B cell (primary cell): ENCODE measurements at regions of chr2 and their contacts with region 1.

Region 1: GRCh38 chr2:54723131-54723995 is at the start of gene EML6:
- DNase-seq: peak; percentile 99
- ATAC-seq: peak; percentile 95
- H3K4me3 ChIP-seq: peak within 1 kb of the TSS; percentile 51 to 98 (median 79)
- H3K4me3 Mint-ChIP-seq: peak within 1 kb of the TSS; percentile 100
- H3K27ac ChIP-seq: peak within 1 kb of the TSS in 1 of 2 donors; percentile 59
- H3K27ac Mint-ChIP-seq: peak within 1 kb of the TSS; percentile 94
- H3K4me1 ChIP-seq: peaks cover 15 to 17% of the 10 kb centered on the region in 2 donors
- H3K4me1 Mint-ChIP-seq: peaks cover 37% of the 10 kb centered on the region
- H3K27me3 ChIP-seq: peaks cover 0 to 27% (median 8%) of the 10 kb centered on the region in 4 experiments
- H3K27me3 Mint-ChIP-seq: peaks cover 13% of the 10 kb centered on the region
- CTCF ChIP-seq: peak; percentile 50
- total RNA-seq, gene EML6: 47.2 and 53.7 TPM in 2 replicates

Region 2: GRCh38 chr2:53786705-53787612 is 936.4 kb before region 1 on chr2 and contains the starts of genes ASB3 and ERLEC1:
- CTCF ChIA-PET with region 1: no interaction called
- POLR2A ChIA-PET with region 1: no interaction called
- intact Hi-C with region 1: loop called (anchors 2 kb)
- DNase-seq: peak; percentile 92
- ATAC-seq: peak; percentile 92
- H3K4me3 ChIP-seq: peak within 1 kb of the TSS; percentile 77 to 98 (median 93)
- H3K4me3 Mint-ChIP-seq: peak within 1 kb of the TSS; percentile 98
- H3K27ac ChIP-seq: peak within 1 kb of the TSS; percentile 80 to 88
- H3K27ac Mint-ChIP-seq: peak within 1 kb of the TSS; percentile 92
- H3K4me1 ChIP-seq: peaks cover 29 to 33% of the 10 kb centered on the region in 2 donors
- H3K4me1 Mint-ChIP-seq: peaks cover 57% of the 10 kb centered on the region
- H3K27me3 ChIP-seq: no peaks in the 10 kb centered on the region
- H3K27me3 Mint-ChIP-seq: no peaks in the 10 kb centered on the region
- CTCF ChIP-seq: no peak
- total RNA-seq, gene ASB3: 30.7 and 38.4 TPM in 2 replicates
- total RNA-seq, gene ERLEC1: 22.9 and 24.5 TPM in 2 replicates

Region 3: DNA sequence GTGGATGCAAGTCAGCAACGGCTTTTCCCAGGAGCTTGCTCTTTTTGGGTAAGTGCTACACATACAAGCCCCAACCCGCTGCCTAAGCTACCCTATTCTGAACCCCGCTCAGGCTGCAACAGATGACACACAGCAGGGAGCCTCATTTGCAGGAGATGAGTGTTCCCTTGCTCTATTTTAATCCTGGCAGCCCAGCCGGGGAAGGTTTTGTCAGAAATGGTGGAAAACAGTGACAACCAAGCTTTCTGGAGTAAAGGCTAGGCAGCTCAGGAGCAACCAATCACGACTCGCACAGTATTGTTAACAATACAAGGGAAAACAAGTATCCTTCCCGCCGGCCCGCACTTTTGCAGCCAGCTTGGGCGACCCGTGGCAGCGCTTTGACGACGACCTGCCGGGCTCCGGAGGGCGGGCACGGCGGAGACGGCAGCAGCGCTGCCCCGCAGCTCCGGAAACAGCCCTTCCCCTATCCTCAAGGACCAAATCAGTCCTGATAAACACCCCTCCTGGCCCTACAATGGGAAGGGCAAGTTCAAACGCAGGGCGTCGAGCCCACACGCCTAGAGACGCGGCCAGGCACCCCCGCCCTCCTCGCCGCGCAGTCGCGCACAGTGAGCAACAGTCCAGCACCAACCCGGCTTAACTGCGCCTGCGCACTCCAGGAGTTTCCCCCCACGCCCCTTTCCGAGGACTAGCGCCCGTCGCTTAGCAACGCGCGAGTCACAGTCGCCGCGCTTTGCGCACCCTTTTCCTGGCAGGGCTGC is 393.0 kb before region 1 on chr2:
- CTCF ChIA-PET with region 1: no interaction called
- POLR2A ChIA-PET with region 1: no interaction called
- intact Hi-C with region 1: loop called (anchors 10 kb)
- DNase-seq: peak; percentile 93
- ATAC-seq: peak; percentile 94
- H3K4me3 ChIP-seq: peak overlapping the region; percentile 51 to 67 (median 57)
- H3K4me3 Mint-ChIP-seq: peak overlapping the region; percentile 94
- H3K27ac ChIP-seq: peak overlapping the region in 1 of 2 donors; percentile 29
- H3K27ac Mint-ChIP-seq: peak overlapping the region; percentile 91
- H3K4me1 ChIP-seq: peaks cover 21 to 23% of the 10 kb centered on the region in 2 donors
- H3K4me1 Mint-ChIP-seq: peaks cover 18% of the 10 kb centered on the region
- H3K27me3 ChIP-seq: peaks cover 0 to 23% (median 10%) of the 10 kb centered on the region in 4 experiments
- H3K27me3 Mint-ChIP-seq: peaks cover 19% of the 10 kb centered on the region
- CTCF ChIP-seq: no peak

Region 4: GRCh38 chr2:54673501-54673998 is 49.8 kb before region 1 on chr2:
- CTCF ChIA-PET with region 1: no interaction called
- POLR2A ChIA-PET with region 1: no interaction called
- intact Hi-C with region 1: loop called (anchors 1 kb)
- DNase-seq: peak; percentile 44
- ATAC-seq: peak; percentile 62
- H3K4me3 ChIP-seq: peak overlapping the region in 2 of 5 experiments; percentile 8 to 39
- H3K4me3 Mint-ChIP-seq: peak overlapping the region; percentile 79
- H3K27ac ChIP-seq: no peak overlapping the region
- H3K27ac Mint-ChIP-seq: peak overlapping the region; percentile 75
- H3K4me1 ChIP-seq: peaks cover 20 to 23% of the 10 kb centered on the region in 2 donors
- H3K4me1 Mint-ChIP-seq: peaks cover 35% of the 10 kb centered on the region
- H3K27me3 ChIP-seq: no peaks in the 10 kb centered on the region
- H3K27me3 Mint-ChIP-seq: no peaks in the 10 kb centered on the region
- CTCF ChIP-seq: no peak

Region 5: DNA sequence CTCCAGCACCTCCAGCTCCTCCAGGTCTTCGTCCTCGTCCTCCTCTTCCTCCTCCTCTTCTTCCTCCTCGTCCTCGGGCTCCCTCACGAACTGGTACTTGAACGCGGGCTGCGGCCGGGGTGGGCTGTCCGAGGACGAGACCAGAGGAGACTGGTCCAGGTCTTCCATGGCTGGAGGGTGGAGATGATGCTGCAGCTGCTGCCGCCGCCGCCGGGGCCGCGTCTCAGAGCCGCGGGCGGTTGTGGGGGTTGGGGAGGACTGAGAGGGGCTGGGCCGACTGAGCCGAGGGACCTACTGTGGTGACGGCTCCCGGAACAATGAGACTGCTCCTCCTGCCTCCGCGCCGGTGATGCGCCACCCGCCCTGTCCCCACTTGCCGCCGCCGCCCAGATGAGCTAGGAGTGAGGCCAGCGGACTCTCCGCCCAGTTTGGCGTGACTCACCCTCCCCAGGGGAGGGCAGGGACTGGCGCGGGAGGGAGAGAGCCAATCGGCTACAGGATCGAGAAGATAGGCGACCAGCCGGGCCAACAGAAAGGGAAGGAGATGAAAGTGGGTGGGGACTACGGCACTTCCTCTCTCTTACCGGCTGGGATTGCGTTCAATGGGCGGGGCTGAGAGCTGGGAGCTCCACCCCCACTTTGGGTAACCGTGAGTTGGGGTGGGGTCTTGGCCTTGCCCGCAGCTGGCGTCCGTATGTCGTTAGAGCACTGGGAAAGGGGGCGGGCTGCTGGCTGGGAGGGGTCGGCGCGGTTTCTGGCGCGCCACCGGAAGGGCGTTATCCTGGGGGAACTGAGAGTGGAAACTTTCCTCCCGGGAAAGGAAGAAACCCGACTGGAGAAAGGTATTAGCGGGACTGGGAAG is 327.0 kb after region 1 on chr2 and contains the start of gene RTN4:
- CTCF ChIA-PET with region 1: interaction called, 6 read pairs
- POLR2A ChIA-PET with region 1: no interaction called
- intact Hi-C with region 1: loop called (anchors 1 kb)
- DNase-seq: peak; percentile 99
- ATAC-seq: peak; percentile 85
- H3K4me3 ChIP-seq: peak within 1 kb of the TSS; percentile 67 to 95 (median 89)
- H3K4me3 Mint-ChIP-seq: peak within 1 kb of the TSS; percentile 100
- H3K27ac ChIP-seq: peak within 1 kb of the TSS; percentile 82 to 89
- H3K27ac Mint-ChIP-seq: peak within 1 kb of the TSS; percentile 100
- H3K4me1 ChIP-seq: peaks cover 48 to 52% of the 10 kb centered on the region in 2 donors
- H3K4me1 Mint-ChIP-seq: peaks cover 71% of the 10 kb centered on the region
- H3K27me3 ChIP-seq: no peaks in the 10 kb centered on the region
- H3K27me3 Mint-ChIP-seq: no peaks in the 10 kb centered on the region
- CTCF ChIP-seq: no peak
- total RNA-seq, gene RTN4: 63.3 and 65.9 TPM in 2 replicates

Region 6: DNA sequence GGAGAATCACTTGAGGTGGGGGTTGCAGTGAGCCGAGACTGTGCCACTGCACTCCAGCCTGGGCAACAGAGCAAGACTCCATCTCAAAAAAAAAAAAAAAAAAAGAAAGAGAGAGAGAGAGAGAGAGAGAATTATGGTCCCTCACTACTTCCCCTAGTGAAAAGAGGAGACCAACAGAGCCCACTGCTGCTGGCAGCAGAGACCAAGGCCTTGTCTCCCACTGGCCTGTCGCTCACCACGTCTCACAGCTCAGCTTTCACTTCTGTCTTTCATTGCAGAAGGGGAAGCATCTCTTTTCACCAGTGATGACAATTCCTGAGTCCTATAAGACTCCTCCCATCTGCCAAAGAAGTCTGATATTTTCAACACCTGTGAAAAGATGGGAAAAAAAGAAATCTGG is 427.5 kb after region 1 on chr2:
- CTCF ChIA-PET with region 1: no interaction called
- POLR2A ChIA-PET with region 1: no interaction called
- intact Hi-C with region 1: no loop called
- DNase-seq: peak; percentile 81
- ATAC-seq: peak; percentile 94
- H3K4me3 ChIP-seq: no peak overlapping the region
- H3K4me3 Mint-ChIP-seq: peak overlapping the region; percentile 10
- H3K27ac ChIP-seq: no peak overlapping the region
- H3K27ac Mint-ChIP-seq: peak overlapping the region; percentile 91
- H3K4me1 ChIP-seq: peaks cover 36 to 53% of the 10 kb centered on the region in 2 donors
- H3K4me1 Mint-ChIP-seq: peaks cover 49% of the 10 kb centered on the region
- H3K27me3 ChIP-seq: no peaks in the 10 kb centered on the region
- H3K27me3 Mint-ChIP-seq: no peaks in the 10 kb centered on the region
- CTCF ChIP-seq: no peak

Region 7: GRCh38 chr2:55282110-55282917 is 559.0 kb after region 1 on chr2:
- CTCF ChIA-PET with region 1: no interaction called
- POLR2A ChIA-PET with region 1: no interaction called
- intact Hi-C with region 1: loop called (anchors 2 kb)
- DNase-seq: peak; percentile 91
- ATAC-seq: peak; percentile 99
- H3K4me3 ChIP-seq: peak overlapping the region; percentile 76 to 92 (median 87)
- H3K4me3 Mint-ChIP-seq: peak overlapping the region; percentile 93
- H3K27ac ChIP-seq: peak overlapping the region; percentile 82 to 89
- H3K27ac Mint-ChIP-seq: peak overlapping the region; percentile 99
- H3K4me1 ChIP-seq: peaks cover 11 to 18% of the 10 kb centered on the region in 2 donors
- H3K4me1 Mint-ChIP-seq: peaks cover 24% of the 10 kb centered on the region
- H3K27me3 ChIP-seq: no peaks in the 10 kb centered on the region
- H3K27me3 Mint-ChIP-seq: no peaks in the 10 kb centered on the region
- CTCF ChIP-seq: no peak